Naive thymus-derived CD4-positive, alpha-beta T cell (primary cell): ENCODE measurements at regions of chr22 and their contacts with region 1.

Region 1: DNA sequence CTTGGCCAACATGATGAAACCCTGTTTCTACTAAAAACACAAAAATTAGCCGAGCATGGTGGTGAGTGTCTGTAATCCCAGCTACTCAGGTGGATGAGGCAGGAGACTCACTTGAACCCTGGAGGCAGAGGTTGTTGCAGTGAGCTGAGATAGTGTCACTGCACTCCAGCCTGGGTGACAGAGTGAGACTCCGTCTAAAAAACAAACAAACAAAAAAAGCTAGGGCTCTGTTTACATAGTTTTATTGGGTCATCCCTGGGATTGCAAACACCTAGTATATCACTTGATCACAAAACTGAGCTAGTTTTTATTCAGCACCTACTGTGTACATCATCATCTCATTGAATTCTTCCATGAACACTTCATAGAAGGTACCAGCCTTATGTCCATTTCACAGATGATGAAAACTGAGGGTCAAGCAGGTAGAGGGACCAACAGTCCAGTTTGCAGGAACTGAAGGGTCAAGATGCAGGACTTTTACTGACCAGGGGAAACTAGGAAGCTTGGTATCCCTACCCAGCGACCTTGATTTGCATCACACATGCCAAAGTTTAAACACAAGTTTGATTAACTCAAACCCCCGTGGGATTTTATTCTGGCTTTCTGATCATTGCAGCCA is 9.2 kb upstream of the MRTFA start:
- DNase-seq: no peak
- ATAC-seq: no peak
- H3K4me3 ChIP-seq: no peak overlapping the region
- H3K4me3 Mint-ChIP-seq: peak overlapping the region in 4 of 10 donors; percentile 49 to 70 (median 62)
- H3K27ac ChIP-seq: no peak overlapping the region
- H3K27ac Mint-ChIP-seq: peak overlapping the region in 2 of 9 donors; percentile 69 to 76
- H3K4me1 ChIP-seq: no peaks in the 10 kb centered on the region
- H3K4me1 Mint-ChIP-seq: peaks cover 0 to 19% (median 6%) of the 10 kb centered on the region in 7 donors
- H3K27me3 ChIP-seq: no peaks in the 10 kb centered on the region
- H3K27me3 Mint-ChIP-seq: no peaks in the 10 kb centered on the region

Region 2: DNA sequence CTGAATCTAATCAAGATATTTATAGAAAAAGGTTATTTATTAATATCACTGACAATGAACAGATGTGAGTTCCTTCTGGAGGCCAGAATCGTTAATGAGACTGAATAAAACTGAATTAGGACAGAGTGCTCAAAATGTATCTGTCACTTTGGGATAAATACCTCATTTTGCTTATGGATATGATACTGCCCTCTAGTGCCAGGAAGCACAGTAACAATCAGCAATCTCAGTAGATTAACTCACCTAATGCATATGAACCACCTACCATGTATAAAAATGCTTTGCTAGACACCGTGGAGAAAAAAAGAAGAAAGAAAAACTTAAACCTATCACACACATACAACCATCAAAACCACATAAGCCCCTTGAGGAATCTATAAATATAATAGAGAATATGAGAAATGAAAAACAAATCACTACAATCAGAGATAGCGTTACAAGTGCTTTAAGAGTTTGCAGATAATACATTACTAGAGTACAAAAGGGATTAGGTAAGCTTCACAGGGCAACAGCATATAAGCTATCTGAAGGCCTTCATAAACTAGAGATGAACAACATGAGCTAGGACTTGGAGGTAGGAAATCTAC is 157.9 kb before region 1 on chr22:
- CTCF ChIA-PET with region 1: interaction called, 28 read pairs
- POLR2A ChIA-PET with region 1: no interaction called
- intact Hi-C with region 1: loop called in 1 of 2 experiments (anchors 1 kb)
- DNase-seq: peak in 7 of 9 donors; percentile 14 to 51 (median 34)
- ATAC-seq: peak; percentile 71
- H3K4me3 ChIP-seq: no peak overlapping the region
- H3K4me3 Mint-ChIP-seq: no peak overlapping the region
- H3K27ac ChIP-seq: no peak overlapping the region
- H3K27ac Mint-ChIP-seq: peak overlapping the region in 6 of 9 donors; percentile 0 to 29 (median 10)
- H3K4me1 ChIP-seq: peaks cover 0 to 32% of the 10 kb centered on the region in 2 donors
- H3K4me1 Mint-ChIP-seq: peaks cover 30 to 62% (median 52%) of the 10 kb centered on the region in 7 donors
- H3K27me3 ChIP-seq: no peaks in the 10 kb centered on the region
- H3K27me3 Mint-ChIP-seq: no peaks in the 10 kb centered on the region

Region 3: GRCh38 chr22:40519284-40519947 is 126.3 kb before region 1 on chr22:
- CTCF ChIA-PET with region 1: interaction called, 90 read pairs
- POLR2A ChIA-PET with region 1: interaction called, 10 read pairs
- intact Hi-C with region 1: no loop called
- DNase-seq: peak in 7 of 9 donors; percentile 36 to 58 (median 46)
- ATAC-seq: peak; percentile 88
- H3K4me3 ChIP-seq: peak overlapping the region; percentile 49
- H3K4me3 Mint-ChIP-seq: peak overlapping the region; percentile 67 to 88 (median 80)
- H3K27ac ChIP-seq: peak overlapping the region; percentile 61
- H3K27ac Mint-ChIP-seq: peak overlapping the region; percentile 84 to 98 (median 95)
- H3K4me1 ChIP-seq: peaks cover 10 to 15% of the 10 kb centered on the region in 2 donors
- H3K4me1 Mint-ChIP-seq: peaks cover 25 to 56% (median 42%) of the 10 kb centered on the region in 7 donors
- H3K27me3 ChIP-seq: no peaks in the 10 kb centered on the region
- H3K27me3 Mint-ChIP-seq: no peaks in the 10 kb centered on the region

Region 4: GRCh38 chr22:40525249-40525884 is 120.3 kb before region 1 on chr22:
- CTCF ChIA-PET with region 1: interaction called, 90 read pairs
- POLR2A ChIA-PET with region 1: interaction called, 10 read pairs
- intact Hi-C with region 1: loop called (anchors 1 kb)
- DNase-seq: peak; percentile 58 to 80 (median 76)
- ATAC-seq: peak; percentile 74
- H3K4me3 ChIP-seq: no peak overlapping the region
- H3K4me3 Mint-ChIP-seq: peak overlapping the region in 1 of 10 donors; percentile 48
- H3K27ac ChIP-seq: no peak overlapping the region
- H3K27ac Mint-ChIP-seq: peak overlapping the region in 8 of 9 donors; percentile 7 to 86 (median 58)
- H3K4me1 ChIP-seq: peaks cover 0 to 11% of the 10 kb centered on the region in 2 donors
- H3K4me1 Mint-ChIP-seq: peaks cover 13 to 55% (median 51%) of the 10 kb centered on the region in 7 donors
- H3K27me3 ChIP-seq: no peaks in the 10 kb centered on the region
- H3K27me3 Mint-ChIP-seq: no peaks in the 10 kb centered on the region

Region 5: DNA sequence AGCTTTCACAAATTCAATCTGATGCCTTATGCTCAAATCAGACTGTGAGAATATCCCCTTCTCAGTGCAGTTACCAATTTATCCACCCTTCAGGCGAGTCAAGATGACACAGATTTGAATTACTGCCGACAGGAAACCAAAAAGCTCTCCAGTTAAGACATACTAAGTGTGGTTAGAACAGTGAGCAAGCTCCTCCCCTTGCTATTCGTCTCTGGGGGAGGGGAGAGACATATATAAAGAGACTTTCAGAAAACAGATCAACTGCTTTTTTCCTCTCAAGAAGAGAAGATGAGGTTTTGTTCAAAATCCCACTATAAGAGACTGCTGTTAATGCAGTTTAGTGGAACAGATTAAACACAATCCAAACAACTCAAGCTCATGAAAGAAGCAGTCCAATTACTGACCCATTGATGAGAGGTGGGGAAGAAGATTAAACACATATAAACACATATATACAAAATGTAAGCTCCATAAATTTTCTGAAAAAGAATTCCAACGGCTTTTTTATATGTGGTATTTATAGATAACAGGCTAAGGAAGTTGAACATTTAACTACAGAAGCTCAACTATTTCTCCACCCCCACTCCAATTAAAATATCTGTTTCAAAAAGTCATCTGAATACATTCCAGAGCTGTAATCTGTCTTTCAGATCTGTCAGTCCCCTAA is 111.8 kb before region 1 on chr22:
- CTCF ChIA-PET with region 1: interaction called, 62 read pairs
- POLR2A ChIA-PET with region 1: interaction called, 9 read pairs
- intact Hi-C with region 1: loop called in 1 of 2 experiments (anchors 2 kb)
- DNase-seq: peak in 7 of 9 donors; percentile 71 to 85 (median 81)
- ATAC-seq: peak; percentile 99
- H3K4me3 ChIP-seq: peak overlapping the region; percentile 53
- H3K4me3 Mint-ChIP-seq: peak overlapping the region; percentile 78 to 96 (median 89)
- H3K27ac ChIP-seq: peak overlapping the region; percentile 64
- H3K27ac Mint-ChIP-seq: peak overlapping the region; percentile 84 to 96 (median 88)
- H3K4me1 ChIP-seq: peaks cover 28 to 36% of the 10 kb centered on the region in 2 donors
- H3K4me1 Mint-ChIP-seq: peaks cover 49 to 71% (median 64%) of the 10 kb centered on the region in 7 donors
- H3K27me3 ChIP-seq: no peaks in the 10 kb centered on the region
- H3K27me3 Mint-ChIP-seq: no peaks in the 10 kb centered on the region

Region 6: GRCh38 chr22:40612291-40612740 is 33.4 kb before region 1 on chr22:
- CTCF ChIA-PET with region 1: no interaction called
- POLR2A ChIA-PET with region 1: no interaction called
- intact Hi-C with region 1: no loop called
- DNase-seq: no peak
- ATAC-seq: no peak
- H3K4me3 ChIP-seq: no peak overlapping the region
- H3K4me3 Mint-ChIP-seq: no peak overlapping the region
- H3K27ac ChIP-seq: no peak overlapping the region
- H3K27ac Mint-ChIP-seq: peak overlapping the region in 1 of 9 donors; percentile 25
- H3K4me1 ChIP-seq: no peaks in the 10 kb centered on the region
- H3K4me1 Mint-ChIP-seq: peaks cover 22 to 68% (median 56%) of the 10 kb centered on the region in 7 donors
- H3K27me3 ChIP-seq: no peaks in the 10 kb centered on the region
- H3K27me3 Mint-ChIP-seq: no peaks in the 10 kb centered on the region

Region 7: GRCh38 chr22:40898850-40899357 is 253.2 kb after region 1 on chr22:
- CTCF ChIA-PET with region 1: interaction called, 4 read pairs
- POLR2A ChIA-PET with region 1: no interaction called
- intact Hi-C with region 1: loop called in 1 of 2 experiments (anchors 5 kb)
- DNase-seq: peak in 7 of 9 donors; percentile 12 to 52 (median 37)
- ATAC-seq: peak; percentile 67
- H3K4me3 ChIP-seq: no peak overlapping the region
- H3K4me3 Mint-ChIP-seq: peak overlapping the region in 1 of 10 donors; percentile 28
- H3K27ac ChIP-seq: no peak overlapping the region
- H3K27ac Mint-ChIP-seq: peak overlapping the region in 2 of 9 donors; percentile 36 to 44
- H3K4me1 ChIP-seq: no peaks in the 10 kb centered on the region
- H3K4me1 Mint-ChIP-seq: peaks cover 4 to 9% (median 5%) of the 10 kb centered on the region in 7 donors
- H3K27me3 ChIP-seq: no peaks in the 10 kb centered on the region
- H3K27me3 Mint-ChIP-seq: no peaks in the 10 kb centered on the region